ENCODE measurements at regions of chr15 and their contacts with region 1.

Region 1: GRCh38 chr15:88610701-88611231 is 10.4 kb upstream of the AEN start:
- DNase-seq: no peak
- ATAC-seq: peak; percentile 6 to 36; a peak in 2 of 6 replicates
- H3K4me3 ChIP-seq: no peak overlapping the region
- H3K27ac ChIP-seq: no peak overlapping the region
- H3K4me1 ChIP-seq: peaks cover 25% of the 10 kb centered on the region
- CTCF ChIP-seq: no peak
- EP300 ChIP-seq: no peak
- POLR2A ChIP-seq: no peak
- RAD21 ChIP-seq: no peak

Region 2: GRCh38 chr15:88476635-88477060 is 134.1 kb before region 1 on chr15:
- CTCF ChIA-PET with region 1: interaction called, 19 read pairs
- POLR2A ChIA-PET with region 1: no interaction called
- DNase-seq: peak; percentile 48 to 68
- ATAC-seq: peak; percentile 24 to 75; a peak in 4 of 6 replicates
- H3K4me3 ChIP-seq: no peak overlapping the region
- H3K27ac ChIP-seq: no peak overlapping the region
- H3K4me1 ChIP-seq: no peaks in the 10 kb centered on the region
- CTCF ChIP-seq: peak; percentile 78
- EP300 ChIP-seq: no peak
- POLR2A ChIP-seq: no peak
- RAD21 ChIP-seq: peak; percentile 84 to 85

Region 3: DNA sequence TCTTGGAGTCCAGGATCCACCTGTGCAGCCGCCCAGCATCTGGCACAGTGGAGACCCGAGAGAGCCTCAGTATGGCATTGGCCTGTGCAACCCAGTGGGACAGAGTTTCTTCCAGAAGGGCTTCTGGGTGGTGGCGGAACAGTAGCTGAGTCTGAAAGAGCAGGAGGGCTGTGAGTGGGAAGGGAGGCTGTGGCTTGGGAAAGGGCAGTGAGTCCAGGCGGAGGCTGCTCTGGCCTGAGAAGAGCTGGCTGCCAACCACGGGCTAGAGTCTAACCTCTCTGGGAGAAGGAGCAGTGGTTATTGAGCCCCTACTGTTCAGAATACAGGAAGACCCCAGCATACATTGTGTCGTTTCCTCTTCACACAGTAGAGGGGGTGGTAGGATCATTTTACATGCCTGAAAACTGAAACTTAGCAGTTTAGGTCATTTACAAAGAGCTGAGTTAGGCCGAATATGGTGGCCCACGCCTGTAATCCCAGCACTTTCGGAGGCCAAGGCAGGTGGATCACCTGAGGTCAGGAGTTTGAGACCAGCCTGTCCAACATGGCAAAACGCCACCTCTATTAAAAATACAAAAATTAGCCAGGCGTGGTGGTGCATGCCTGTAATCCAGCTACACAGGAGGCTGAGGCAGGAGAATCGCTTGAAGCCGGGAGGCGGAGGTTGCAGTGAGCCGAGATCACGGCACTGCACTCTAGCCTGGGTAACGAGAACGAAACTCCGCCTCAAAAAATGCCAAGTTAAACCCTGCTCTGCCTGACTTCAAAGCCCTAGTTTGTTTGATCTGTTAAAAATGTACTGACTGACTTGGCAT is 13.6 kb after region 1 on chr15:
- CTCF ChIA-PET with region 1: interaction called, 12 read pairs
- POLR2A ChIA-PET with region 1: no interaction called
- DNase-seq: no peak
- ATAC-seq: no peak
- H3K4me3 ChIP-seq: peak overlapping the region; percentile 82; the same call in 1 of the 3 replicates
- H3K27ac ChIP-seq: peak overlapping the region; percentile 34 to 99; a peak in 4 of 6 replicates
- H3K4me1 ChIP-seq: peaks cover 74% of the 10 kb centered on the region
- CTCF ChIP-seq: no peak
- EP300 ChIP-seq: no peak
- POLR2A ChIP-seq: no peak
- RAD21 ChIP-seq: 0 out of 5 replicates have a peak, but pooled peaks of 1 of the 2 experiments have one; percentile 19

Measured in A549 (cell line).